ENCODE measurements at regions of chr17 and their contacts with region 1.

Region 1: GRCh38 chr17:29880031-29880430 is 50.0 kb downstream of the SSH2 start:
- H3K4me3 ChIP-seq: no peak overlapping the region
- H3K27ac ChIP-seq: no peak overlapping the region
- H3K4me1 ChIP-seq: peaks cover 3% of the 10 kb centered on the region
- CTCF ChIP-seq: no peak

Region 2: GRCh38 chr17:29789196-29790170 is 90.5 kb before region 1 on chr17:
- CTCF ChIA-PET with region 1: no interaction called
- POLR2A ChIA-PET with region 1: no interaction called
- H3K4me3 ChIP-seq: no peak overlapping the region
- H3K27ac ChIP-seq: no peak overlapping the region
- H3K4me1 ChIP-seq: peaks cover 8% of the 10 kb centered on the region
- CTCF ChIP-seq: no peak

Region 3: GRCh38 chr17:29867643-29868181 is 12.3 kb before region 1 on chr17:
- CTCF ChIA-PET with region 1: interaction called, 11 read pairs
- POLR2A ChIA-PET with region 1: interaction called, 3 read pairs
- H3K4me3 ChIP-seq: no peak overlapping the region
- H3K27ac ChIP-seq: no peak overlapping the region
- H3K4me1 ChIP-seq: 0 out of 2 replicates have a peak, but pooled peaks cover 7% of the 10 kb centered on the region
- CTCF ChIP-seq: no peak; the same call in 1 of the 2 replicates